WTC11 (cell line): ENCODE measurements at regions of chr5 and their contacts with region 1.

Region 1: DNA sequence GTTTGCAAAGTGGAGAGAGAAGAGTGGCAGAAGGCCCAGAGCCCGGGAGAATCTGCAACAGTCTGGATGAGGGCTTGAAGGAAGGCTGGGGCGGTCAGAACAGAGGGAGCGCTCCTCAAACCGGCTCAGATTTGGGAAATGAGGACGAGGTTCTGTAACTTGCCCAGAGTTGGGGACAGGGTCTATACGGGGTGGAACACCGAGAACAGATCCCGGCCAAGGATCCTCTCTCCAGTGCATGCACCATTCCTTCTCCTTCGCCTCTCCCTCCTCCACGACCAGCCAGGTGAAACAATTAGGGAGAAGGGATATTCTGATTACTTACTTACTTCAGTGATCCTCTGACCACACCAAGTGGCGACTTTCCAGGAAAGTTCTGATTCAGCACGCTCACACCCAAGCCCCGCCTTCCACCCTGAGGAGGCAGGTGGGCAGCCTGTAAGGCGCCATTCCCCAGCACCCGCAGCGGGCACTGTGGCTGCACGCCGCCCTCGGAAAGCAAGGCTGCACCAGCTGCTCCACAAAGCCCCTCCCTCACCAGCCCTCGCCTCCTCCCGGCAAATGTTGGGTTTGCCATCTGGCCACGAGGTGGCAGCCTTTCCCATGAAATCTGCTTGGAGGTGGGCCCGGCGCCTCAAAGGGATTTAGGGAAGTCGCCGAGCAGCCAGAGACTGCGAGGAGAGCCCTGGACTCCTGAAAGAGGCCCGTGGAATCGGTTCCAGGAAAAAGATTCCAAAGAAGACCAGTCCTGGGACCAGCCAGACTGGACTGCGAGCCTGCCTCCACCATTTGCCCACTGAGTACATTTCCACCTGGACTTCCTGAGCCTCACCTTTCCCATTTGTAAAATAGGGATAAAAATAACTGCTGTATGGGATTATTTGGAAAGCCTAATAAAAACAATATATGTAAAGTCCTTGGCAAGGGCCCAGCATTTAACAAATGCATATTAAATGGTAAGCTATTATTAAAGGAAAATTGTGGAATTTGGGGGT is 22.2 kb upstream of the WWC1 start:
- DNase-seq: peak; percentile 96
- ATAC-seq: peak; percentile 94
- H3K4me3 Mint-ChIP-seq: peak overlapping the region; percentile 79
- H3K27ac Mint-ChIP-seq: no peak overlapping the region
- H3K4me1 Mint-ChIP-seq: peaks cover 23% of the 10 kb centered on the region
- H3K27me3 Mint-ChIP-seq: peaks cover 14% of the 10 kb centered on the region
- CTCF ChIP-seq: peak; percentile 78

Region 2: DNA sequence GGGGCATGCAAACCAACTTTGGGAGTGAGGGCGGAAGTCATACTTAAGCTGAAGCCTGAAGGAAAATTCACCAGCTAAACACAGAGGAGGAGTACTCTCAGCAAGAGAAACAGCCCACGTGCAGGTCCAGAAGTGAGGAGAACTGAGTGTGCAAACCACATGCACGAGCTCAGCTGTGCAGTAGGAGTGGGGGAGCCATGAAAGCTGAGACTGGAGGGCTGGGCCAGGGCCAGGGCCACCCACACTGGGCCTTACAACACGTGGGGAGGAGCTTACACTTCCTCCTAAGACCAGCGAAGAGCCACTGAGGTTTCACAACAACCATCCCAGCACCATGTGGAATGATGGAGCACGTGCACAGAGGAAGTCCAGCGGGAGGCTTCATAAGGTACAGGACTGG is 12.9 kb after region 1 on chr5:
- CTCF ChIA-PET with region 1: interaction called, 15 read pairs
- POLR2A ChIA-PET with region 1: interaction called, 6 read pairs
- DNase-seq: no peak
- ATAC-seq: peak; percentile 68
- H3K4me3 Mint-ChIP-seq: no peak overlapping the region
- H3K27ac Mint-ChIP-seq: no peak overlapping the region
- H3K4me1 Mint-ChIP-seq: peaks cover 20% of the 10 kb centered on the region
- H3K27me3 Mint-ChIP-seq: peaks cover 8% of the 10 kb centered on the region; the same call in 1 of the 2 replicates
- CTCF ChIP-seq: no peak

Region 3: DNA sequence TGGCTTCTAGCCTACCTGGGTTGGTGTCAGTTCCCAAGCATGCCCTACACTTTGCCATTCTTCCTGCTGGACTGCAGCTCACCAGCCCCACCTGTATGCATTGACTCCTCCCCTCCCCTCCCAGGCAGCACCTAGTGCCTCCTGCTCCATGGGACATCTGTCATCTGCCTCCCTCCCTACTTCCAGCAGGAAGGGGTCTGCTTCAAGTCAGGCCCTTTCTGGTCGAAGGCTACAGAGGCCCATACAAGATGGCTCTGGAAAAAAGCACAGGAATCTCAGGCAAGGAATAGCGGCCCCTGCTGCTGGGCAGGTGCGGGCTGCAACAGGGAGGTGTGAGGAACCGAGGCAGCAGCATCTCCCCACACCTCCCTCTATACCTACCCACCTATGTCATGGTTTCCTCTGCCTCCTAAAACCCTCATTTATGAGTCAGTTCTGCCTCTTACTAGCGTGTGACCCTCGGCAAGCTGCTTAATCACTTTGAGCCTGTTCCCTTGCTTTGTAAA is 41.9 kb after region 1 on chr5:
- CTCF ChIA-PET with region 1: interaction called, 18 read pairs
- POLR2A ChIA-PET with region 1: no interaction called
- DNase-seq: peak; percentile 52
- ATAC-seq: peak; percentile 86
- H3K4me3 Mint-ChIP-seq: no peak overlapping the region
- H3K27ac Mint-ChIP-seq: no peak overlapping the region
- H3K4me1 Mint-ChIP-seq: peaks cover 28% of the 10 kb centered on the region
- H3K27me3 Mint-ChIP-seq: peaks cover 36% of the 10 kb centered on the region
- CTCF ChIP-seq: no peak

Region 4: DNA sequence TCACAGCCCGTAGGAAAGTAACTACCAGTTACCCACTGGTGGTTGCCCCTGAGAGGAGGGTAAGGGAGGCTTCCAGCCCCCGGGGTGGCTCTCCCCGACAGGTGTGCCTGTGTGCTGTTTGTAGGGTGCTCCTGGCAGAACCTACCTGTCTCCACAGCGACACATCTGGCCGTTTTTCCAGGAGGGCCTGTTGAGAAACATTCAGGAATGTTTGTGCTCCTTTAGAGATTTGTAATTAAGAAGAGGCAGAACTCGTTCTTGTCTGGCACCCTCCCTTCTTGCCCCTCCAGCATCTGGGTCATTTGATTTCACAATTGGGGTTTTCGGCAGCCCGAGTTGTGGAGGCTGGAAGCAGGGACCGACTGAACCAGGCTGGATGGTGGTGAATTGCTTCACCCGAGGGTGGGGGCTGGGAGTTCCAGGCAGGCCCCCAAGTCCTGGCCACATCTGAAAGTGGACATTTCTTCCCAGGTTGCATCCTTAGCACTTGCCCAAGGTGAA is 96.4 kb after region 1 on chr5:
- CTCF ChIA-PET with region 1: interaction called, 12 read pairs
- POLR2A ChIA-PET with region 1: no interaction called
- DNase-seq: peak; percentile 60
- ATAC-seq: peak; percentile 74
- H3K4me3 Mint-ChIP-seq: no peak overlapping the region
- H3K27ac Mint-ChIP-seq: peak overlapping the region; percentile 22; the same call in 1 of the 2 replicates
- H3K4me1 Mint-ChIP-seq: peaks cover 31% of the 10 kb centered on the region
- H3K27me3 Mint-ChIP-seq: no peaks in the 10 kb centered on the region
- CTCF ChIP-seq: no peak

Region 5: GRCh38 chr5:168377525-168377924 is 108.3 kb after region 1 on chr5:
- CTCF ChIA-PET with region 1: no interaction called
- POLR2A ChIA-PET with region 1: no interaction called
- DNase-seq: no peak
- ATAC-seq: no peak
- H3K4me3 Mint-ChIP-seq: no peak overlapping the region
- H3K27ac Mint-ChIP-seq: no peak overlapping the region
- H3K4me1 Mint-ChIP-seq: no peaks in the 10 kb centered on the region
- H3K27me3 Mint-ChIP-seq: no peaks in the 10 kb centered on the region
- CTCF ChIP-seq: no peak

Region 6: DNA sequence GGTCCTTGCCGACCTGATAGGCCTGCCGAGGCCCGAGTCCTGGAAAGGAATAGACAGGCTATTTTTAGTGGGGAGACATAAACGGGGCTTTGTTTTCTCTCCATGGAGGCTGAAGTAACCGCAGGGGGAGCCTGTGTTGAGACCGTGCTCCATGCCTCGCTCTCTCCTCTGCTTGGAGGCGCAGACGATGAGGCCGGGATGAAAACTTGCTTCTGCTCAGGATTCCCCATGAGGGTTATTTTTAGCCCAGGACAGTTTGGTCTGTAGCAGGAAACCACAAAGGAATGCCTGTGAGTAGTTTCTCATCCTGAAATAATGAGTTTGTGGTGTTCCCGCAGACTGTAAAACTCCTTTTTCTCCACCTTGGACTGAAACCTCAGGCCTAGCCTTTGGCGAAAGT is 135.1 kb after region 1 on chr5:
- CTCF ChIA-PET with region 1: interaction called, 11 read pairs
- POLR2A ChIA-PET with region 1: no interaction called
- DNase-seq: no peak
- ATAC-seq: no peak
- H3K4me3 Mint-ChIP-seq: no peak overlapping the region
- H3K27ac Mint-ChIP-seq: no peak overlapping the region
- H3K4me1 Mint-ChIP-seq: peaks cover 10% of the 10 kb centered on the region
- H3K27me3 Mint-ChIP-seq: no peaks in the 10 kb centered on the region
- CTCF ChIP-seq: no peak

Region 7: GRCh38 chr5:168422431-168422830 is 153.2 kb after region 1 on chr5:
- CTCF ChIA-PET with region 1: interaction called, 26 read pairs
- POLR2A ChIA-PET with region 1: no interaction called
- DNase-seq: no peak
- ATAC-seq: peak; percentile 84
- H3K4me3 Mint-ChIP-seq: no peak overlapping the region
- H3K27ac Mint-ChIP-seq: no peak overlapping the region
- H3K4me1 Mint-ChIP-seq: no peaks in the 10 kb centered on the region
- H3K27me3 Mint-ChIP-seq: no peaks in the 10 kb centered on the region
- CTCF ChIP-seq: no peak